GM12878 (cell line): ENCODE measurements at regions of chr19 and their contacts with region 1.

Region 1: GRCh38 chr19:7903244-7904073 is at the start of gene MAP2K7:
- DNase-seq: peak; percentile 99
- ATAC-seq: peak; percentile 89
- H3K4me3 ChIP-seq: peak within 1 kb of the TSS; percentile 95
- H3K27ac ChIP-seq: peak within 1 kb of the TSS; percentile 81
- H3K4me1 ChIP-seq: peaks cover 14% of the 10 kb centered on the region
- H3K27me3 ChIP-seq: no peaks in the 10 kb centered on the region
- CTCF ChIP-seq: peak; percentile 65 to 99 (median 90); a peak in 5 of 6 replicates
- EP300 ChIP-seq: no peak; a peak in 1 of 4 replicates
- POLR2A ChIP-seq: peak; percentile 92
- RAD21 ChIP-seq: peak; percentile 36; the same call in 1 of the 2 replicates
- polyA plus RNA-seq, gene MAP2K7: 0.34 to 0.95 TPM

Region 2: DNA sequence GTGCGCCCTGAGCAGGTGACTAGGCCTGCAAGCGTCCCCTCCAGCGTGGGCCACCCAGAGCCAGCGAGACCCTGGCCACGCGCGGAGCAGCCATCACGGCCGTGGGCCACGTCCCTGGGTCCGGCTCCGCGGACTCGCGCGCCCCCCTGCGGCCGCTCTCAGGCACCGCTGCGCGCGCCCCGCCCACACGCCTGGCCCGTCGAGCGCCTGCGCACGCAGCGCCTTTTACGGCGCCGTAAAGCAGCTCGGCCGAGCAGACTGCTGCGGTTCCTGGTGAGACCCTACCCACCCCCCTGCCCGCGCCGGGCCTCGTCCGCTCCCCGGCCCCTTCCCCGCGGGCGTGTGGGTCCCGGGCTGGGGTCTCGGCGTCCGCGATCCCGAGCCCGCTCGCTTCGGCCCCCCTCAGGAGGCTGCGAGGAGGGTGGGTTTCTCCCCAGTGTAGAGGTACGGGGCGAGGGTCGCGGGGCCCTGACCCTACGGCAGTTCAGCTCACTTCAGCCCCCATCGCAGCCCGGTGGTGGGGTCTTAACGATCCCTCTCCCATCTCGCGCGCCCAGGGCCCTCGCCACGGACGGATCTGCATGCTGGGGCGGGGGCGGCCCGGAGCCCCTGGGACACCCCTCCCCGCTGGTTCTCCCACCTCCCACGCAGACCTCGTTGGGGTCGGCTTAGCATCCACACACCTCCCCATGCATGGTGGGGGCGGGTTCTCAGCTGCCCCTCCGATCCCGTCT is 222.7 kb before region 1 on chr19 and contains the start of gene TRAPPC5:
- CTCF ChIA-PET with region 1: interaction called, 5 read pairs
- POLR2A ChIA-PET with region 1: no interaction called
- RAD21 ChIA-PET with region 1: no interaction called
- SMC1A ChIA-PET with region 1: no interaction called
- in situ Hi-C with region 1: no loop called
- intact Hi-C with region 1: loop called (anchors 10 kb)
- DNase-seq: no peak
- ATAC-seq: peak; percentile 79
- H3K4me3 ChIP-seq: peak within 1 kb of the TSS; percentile 85
- H3K27ac ChIP-seq: peak within 1 kb of the TSS; percentile 97
- H3K4me1 ChIP-seq: peaks cover 39% of the 10 kb centered on the region
- H3K27me3 ChIP-seq: no peaks in the 10 kb centered on the region
- CTCF ChIP-seq: peak; percentile 64 to 97 (median 94); a peak in 4 of 6 replicates
- EP300 ChIP-seq: no peak
- POLR2A ChIP-seq: 0 out of 2 replicates have a peak, but pooled peaks have one; percentile 65
- RAD21 ChIP-seq: peak; percentile 75
- polyA plus RNA-seq, gene TRAPPC5: 4.2 to 22.5 TPM

Region 3: DNA sequence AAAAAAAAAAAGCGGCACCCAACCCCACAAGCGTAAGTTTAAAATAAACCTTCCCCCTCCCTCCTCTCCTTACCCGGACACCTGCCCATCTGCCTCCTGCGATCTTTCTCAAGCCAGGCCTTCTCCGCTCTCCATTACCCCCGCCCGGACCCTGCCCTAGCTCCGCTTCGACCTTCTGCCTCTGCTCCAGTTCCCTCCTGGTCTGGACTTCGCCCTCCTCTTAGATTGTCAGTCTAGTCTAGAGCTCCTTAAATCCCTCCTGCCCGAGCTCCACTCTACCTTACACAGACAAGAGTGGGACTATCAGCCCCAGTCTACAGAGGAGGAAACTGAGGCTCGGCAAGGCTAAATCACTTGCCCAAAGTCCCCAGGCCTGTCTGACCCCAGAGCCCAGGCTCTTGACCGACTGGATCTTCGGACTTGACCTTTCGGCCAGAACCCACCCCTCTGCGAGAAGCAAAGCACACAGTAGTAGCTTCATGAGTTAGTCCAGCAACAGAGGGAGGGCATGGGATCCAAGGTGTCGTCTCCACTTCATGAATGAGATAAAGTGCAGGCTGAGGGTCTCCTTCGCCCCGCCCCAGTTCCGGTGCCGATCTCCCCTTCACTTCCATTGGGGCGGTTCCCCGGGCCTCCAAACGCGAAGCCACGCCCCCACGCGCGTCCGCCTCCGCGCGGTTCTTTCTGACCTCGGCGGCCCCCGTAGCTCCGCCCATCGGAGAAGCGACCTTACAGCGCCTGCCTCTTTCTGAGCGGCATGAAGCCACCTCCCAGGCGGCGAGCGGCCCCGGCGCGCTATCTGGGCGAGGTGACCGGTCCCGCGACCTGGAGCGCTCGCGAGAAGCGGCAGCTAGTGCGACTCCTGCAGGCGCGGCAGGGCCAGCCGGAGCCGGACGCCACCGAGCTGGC is 16.4 kb after region 1 on chr19 and contains the start of gene SNAPC2:
- CTCF ChIA-PET with region 1: interaction called, 13 read pairs
- POLR2A ChIA-PET with region 1: interaction called, 27 read pairs
- RAD21 ChIA-PET with region 1: interaction called, 17 read pairs
- SMC1A ChIA-PET with region 1: interaction called, 13 read pairs
- in situ Hi-C with region 1: no loop called
- intact Hi-C with region 1: no loop called
- DNase-seq: peak; percentile 70
- ATAC-seq: peak; percentile 86
- H3K4me3 ChIP-seq: peak within 1 kb of the TSS; percentile 82
- H3K27ac ChIP-seq: peak within 1 kb of the TSS; percentile 44
- H3K4me1 ChIP-seq: peaks cover 11% of the 10 kb centered on the region
- H3K27me3 ChIP-seq: peaks cover 8 to 21% of the 10 kb centered on the region in 2 experiments
- CTCF ChIP-seq: no peak
- EP300 ChIP-seq: no peak
- POLR2A ChIP-seq: peak; percentile 61; the same call in 1 of the 2 replicates
- RAD21 ChIP-seq: no peak
- polyA plus RNA-seq, gene SNAPC2: 0.19 to 1.0 TPM